Right ventricle myocardium inferior (tissue), 1 donor: ENCODE measurements at regions of chr14 and their contacts with region 1.

Region 1: GRCh38 chr14:104078031-104078455 is 7.5 kb upstream of the ASPG start:
- DNase-seq: peak; percentile 90
- ATAC-seq: peak; percentile 88

Region 2: DNA sequence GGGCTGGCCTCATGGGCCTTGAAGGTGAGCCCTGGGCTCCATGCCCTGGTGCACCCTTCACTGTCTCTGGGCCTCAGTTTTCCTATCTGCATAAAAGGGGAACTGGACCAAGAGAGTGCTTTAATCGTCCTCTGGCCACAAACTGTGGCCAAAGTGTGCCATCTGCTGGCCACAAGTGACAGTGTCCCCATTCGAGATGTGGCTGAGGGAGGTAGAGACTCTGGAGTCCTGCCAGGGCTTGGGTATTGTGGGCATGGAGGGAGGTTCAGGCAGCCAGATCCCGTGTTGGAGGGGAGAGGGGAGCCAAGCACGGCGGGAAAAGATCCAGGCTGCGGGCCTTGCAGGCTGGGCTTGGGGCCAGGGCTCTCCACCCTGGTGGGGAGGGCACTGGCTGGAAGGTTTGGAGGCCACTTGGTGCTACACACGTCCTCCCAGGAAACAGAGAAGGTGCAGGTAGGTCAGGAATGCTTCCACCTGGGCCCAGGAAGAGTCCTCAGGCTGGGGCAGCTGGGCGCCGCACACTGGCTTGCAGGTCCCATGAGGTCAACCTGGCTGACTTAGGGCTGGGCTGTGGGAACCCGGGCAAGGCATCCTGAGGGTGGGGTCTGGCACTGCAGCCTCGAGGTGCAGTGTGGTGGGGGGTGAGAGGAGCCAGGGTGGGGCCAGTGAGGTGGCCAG is 53.1 kb after region 1 on chr14:
- intact Hi-C with region 1: loop called (anchors 1 kb)
- DNase-seq: peak; percentile 77
- ATAC-seq: peak; percentile 83

Region 3: DNA sequence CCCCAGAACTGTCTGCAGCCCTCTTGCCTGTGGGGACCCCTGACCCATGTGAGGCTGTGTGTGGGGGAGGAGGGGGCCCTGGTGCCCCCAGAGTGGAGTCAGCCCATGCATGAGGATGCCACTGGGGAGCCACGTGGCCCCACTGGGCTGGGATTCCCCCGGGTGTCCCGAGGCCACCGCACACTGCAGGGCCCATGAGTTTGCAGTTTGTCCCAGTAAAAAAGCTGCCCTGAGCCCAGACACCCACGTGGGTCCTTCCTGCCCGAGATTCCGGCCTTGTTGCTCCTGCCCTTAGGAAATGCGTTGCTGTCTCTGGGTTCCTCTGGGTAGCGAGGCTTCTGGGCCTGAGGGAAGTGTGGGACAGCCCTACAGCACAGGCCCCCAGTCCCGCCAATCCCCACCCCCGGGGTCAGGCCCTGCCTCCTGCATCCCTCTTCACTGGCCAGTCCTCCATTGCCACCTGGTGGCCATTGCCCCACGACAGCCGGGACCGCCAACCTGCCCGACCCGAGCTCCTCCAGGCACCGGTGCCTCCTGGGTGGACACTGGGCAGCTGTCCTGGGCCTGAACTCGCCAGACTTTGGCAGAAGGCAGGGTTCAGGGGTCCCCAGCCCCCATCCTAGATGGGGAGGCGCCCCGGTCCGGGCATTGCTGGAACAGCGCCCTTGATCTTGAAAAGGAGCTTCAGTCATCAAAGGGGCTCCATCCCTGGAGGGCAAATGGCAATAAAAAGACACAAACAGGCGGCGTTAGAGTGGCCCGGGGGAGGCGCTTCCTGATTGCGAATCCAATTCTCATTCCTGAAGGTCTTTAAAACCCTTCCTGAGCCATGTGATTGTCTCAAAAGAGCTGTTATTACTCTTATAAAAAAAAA is 485.9 kb after region 1 on chr14:
- intact Hi-C with region 1: loop called (anchors 5 kb)
- DNase-seq: peak; percentile 13
- ATAC-seq: peak; percentile 72

Region 4: GRCh38 chr14:104639889-104640548 is 562.0 kb after region 1 on chr14:
- intact Hi-C with region 1: loop called (anchors 2 kb)
- DNase-seq: no peak
- ATAC-seq: peak; percentile 83

Region 5: GRCh38 chr14:104826189-104826860 is 748.3 kb after region 1 on chr14:
- intact Hi-C with region 1: no loop called
- DNase-seq: peak; percentile 95
- ATAC-seq: peak; percentile 92

Region 6: DNA sequence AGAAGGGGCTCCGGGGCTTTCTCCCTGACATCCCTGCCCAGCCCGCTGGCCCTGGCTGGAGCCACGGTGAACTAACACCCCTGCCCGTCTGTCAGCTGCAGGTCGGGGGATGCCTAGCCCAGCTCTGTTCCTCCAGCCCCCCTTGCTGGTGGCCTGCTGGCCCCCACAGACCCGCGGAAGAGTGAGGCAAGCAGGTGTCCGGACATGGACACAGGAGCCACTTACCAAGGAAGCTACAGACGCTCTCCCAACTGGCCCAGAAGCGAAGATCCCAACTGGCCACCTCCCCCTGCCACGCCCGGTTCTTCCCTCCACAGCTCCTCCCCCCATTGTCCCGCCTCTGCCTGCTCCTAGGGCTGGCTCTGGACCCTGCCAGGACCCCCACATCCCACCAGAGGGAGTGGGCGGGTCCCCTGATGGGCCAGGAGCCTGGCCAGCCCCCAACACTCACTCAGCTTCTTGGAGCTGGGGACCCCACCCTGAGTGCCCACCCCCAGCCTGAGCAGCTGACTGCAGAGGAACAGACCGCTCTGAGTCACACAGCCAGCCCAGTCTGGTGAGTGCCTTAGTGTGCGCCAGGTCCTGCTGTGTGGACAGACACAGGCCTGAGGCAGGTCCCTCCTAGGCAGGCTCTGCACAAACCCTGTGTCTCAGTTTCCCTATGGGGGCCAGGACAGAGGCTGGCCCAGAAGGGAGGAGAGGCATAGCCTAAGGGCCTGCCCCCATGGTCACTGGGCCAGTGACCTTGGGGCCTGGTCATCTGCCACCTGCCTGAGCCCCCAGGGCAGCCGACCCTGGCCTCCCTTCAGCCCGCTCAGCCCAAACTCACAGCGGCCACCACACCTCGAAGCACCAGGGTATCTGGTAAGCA is 892.4 kb after region 1 on chr14:
- intact Hi-C with region 1: no loop called
- DNase-seq: peak; percentile 77
- ATAC-seq: peak; percentile 4